ENCODE measurements at regions of chr1 and their contacts with region 1.

Region 1: GRCh38 chr1:94237291-94238226 is at the start of gene ARHGAP29:
- DNase-seq: peak; percentile 80
- H3K4me3 Mint-ChIP-seq: peak within 1 kb of the TSS; percentile 95
- H3K27ac Mint-ChIP-seq: peak within 1 kb of the TSS; percentile 90
- H3K4me1 Mint-ChIP-seq: peaks cover 39% of the 10 kb centered on the region
- H3K27me3 Mint-ChIP-seq: no peaks in the 10 kb centered on the region
- CTCF ChIP-seq: no peak
- total RNA-seq, gene ARHGAP29: 38.6 and 46.7 TPM in 2 replicates

Region 2: GRCh38 chr1:94045465-94046056 is 192.0 kb before region 1 on chr1:
- CTCF ChIA-PET with region 1: interaction called, 6 read pairs
- POLR2A ChIA-PET with region 1: interaction called, 3 read pairs
- intact Hi-C with region 1: loop called (anchors 2 kb)
- DNase-seq: peak; percentile 90
- H3K4me3 Mint-ChIP-seq: no peak overlapping the region
- H3K27ac Mint-ChIP-seq: peak overlapping the region; percentile 51
- H3K4me1 Mint-ChIP-seq: peaks cover 18% of the 10 kb centered on the region
- H3K27me3 Mint-ChIP-seq: no peaks in the 10 kb centered on the region
- CTCF ChIP-seq: peak; percentile 45

Region 3: GRCh38 chr1:94092210-94092613 is 145.3 kb before region 1 on chr1:
- CTCF ChIA-PET with region 1: no interaction called
- POLR2A ChIA-PET with region 1: no interaction called
- intact Hi-C with region 1: no loop called
- DNase-seq: no peak
- H3K4me3 Mint-ChIP-seq: no peak overlapping the region
- H3K27ac Mint-ChIP-seq: no peak overlapping the region
- H3K4me1 Mint-ChIP-seq: peaks cover 6% of the 10 kb centered on the region
- H3K27me3 Mint-ChIP-seq: no peaks in the 10 kb centered on the region
- CTCF ChIP-seq: no peak

Region 4: GRCh38 chr1:94209425-94209824 is 28.1 kb before region 1 on chr1:
- CTCF ChIA-PET with region 1: interaction called, 3 read pairs
- POLR2A ChIA-PET with region 1: interaction called, 14 read pairs
- intact Hi-C with region 1: no loop called
- DNase-seq: peak; percentile 75
- H3K4me3 Mint-ChIP-seq: no peak overlapping the region
- H3K27ac Mint-ChIP-seq: no peak overlapping the region
- H3K4me1 Mint-ChIP-seq: peaks cover 13% of the 10 kb centered on the region
- H3K27me3 Mint-ChIP-seq: no peaks in the 10 kb centered on the region
- CTCF ChIP-seq: no peak

Region 5: DNA sequence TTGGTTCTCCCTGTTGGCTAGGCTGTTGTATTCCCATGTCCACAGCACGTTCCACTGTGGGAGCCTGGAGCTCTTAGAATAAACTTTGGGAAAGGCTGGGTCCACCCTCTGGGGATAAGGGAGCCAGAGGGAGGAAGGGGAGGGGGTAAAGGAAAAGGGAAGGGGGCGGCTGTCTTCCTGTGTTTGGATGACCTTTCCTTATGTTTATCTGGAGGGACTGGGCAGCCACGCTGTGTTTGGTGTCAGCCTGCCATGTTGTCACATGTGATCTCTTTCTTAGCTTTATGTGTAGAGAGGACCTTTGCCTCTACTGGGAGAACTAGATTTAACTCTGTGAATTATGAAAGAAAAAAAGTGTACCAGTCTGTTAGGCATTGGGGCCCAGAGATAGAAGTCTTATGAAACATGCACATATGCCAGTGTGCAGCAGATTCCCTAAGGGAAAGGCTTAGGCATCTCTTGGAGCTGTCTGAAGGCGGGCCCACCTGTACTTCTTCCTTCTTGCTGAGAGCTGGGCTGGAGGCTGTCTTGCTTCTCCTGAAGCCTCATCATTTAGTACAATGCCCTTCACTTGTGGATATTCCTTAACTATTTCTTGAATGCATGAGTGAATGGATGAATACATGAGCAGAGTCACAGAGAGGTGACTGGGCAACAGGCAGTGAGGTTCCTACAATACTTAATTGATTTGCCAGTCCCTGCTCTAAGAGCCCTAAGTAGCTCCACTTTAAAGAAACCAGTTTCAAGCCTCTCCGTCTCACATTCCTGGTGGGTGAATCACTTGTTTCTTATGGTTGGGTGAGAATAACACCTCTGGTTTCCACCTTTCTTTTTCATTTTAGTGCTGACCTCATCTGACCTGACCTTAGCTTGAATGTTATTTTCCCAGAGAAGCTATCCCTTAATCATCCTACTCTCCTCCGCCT is 62.3 kb after region 1 on chr1:
- CTCF ChIA-PET with region 1: interaction called, 3 read pairs
- POLR2A ChIA-PET with region 1: interaction called, 40 read pairs
- intact Hi-C with region 1: no loop called
- DNase-seq: peak; percentile 91
- H3K4me3 Mint-ChIP-seq: no peak overlapping the region
- H3K27ac Mint-ChIP-seq: peak overlapping the region; percentile 92
- H3K4me1 Mint-ChIP-seq: peaks cover 30% of the 10 kb centered on the region
- H3K27me3 Mint-ChIP-seq: no peaks in the 10 kb centered on the region
- CTCF ChIP-seq: no peak

Region 6: GRCh38 chr1:94438692-94439276 is 201.2 kb after region 1 on chr1:
- CTCF ChIA-PET with region 1: no interaction called
- POLR2A ChIA-PET with region 1: no interaction called
- intact Hi-C with region 1: no loop called
- DNase-seq: no peak
- H3K4me3 Mint-ChIP-seq: no peak overlapping the region
- H3K27ac Mint-ChIP-seq: no peak overlapping the region
- H3K4me1 Mint-ChIP-seq: peaks cover 16% of the 10 kb centered on the region
- H3K27me3 Mint-ChIP-seq: no peaks in the 10 kb centered on the region
- CTCF ChIP-seq: no peak

Measured in MCF 10A (cell line).